ENCODE measurements at regions of chr9 and their contacts with region 1.

Region 1: GRCh38 chr9:7988644-7989280 is 189.2 kb upstream of the DMAC1 start:
- DNase-seq: no peak
- ATAC-seq: no peak
- H3K4me3 ChIP-seq: no peak overlapping the region
- H3K4me3 Mint-ChIP-seq: no peak overlapping the region
- H3K27ac ChIP-seq: no peak overlapping the region
- H3K27ac Mint-ChIP-seq: no peak overlapping the region
- H3K4me1 ChIP-seq: no peaks in the 10 kb centered on the region
- H3K4me1 Mint-ChIP-seq: peaks cover under 1% of the 10 kb centered on the region
- H3K27me3 ChIP-seq: peaks cover 0 to 3% of the 10 kb centered on the region in 2 experiments
- H3K27me3 Mint-ChIP-seq: peaks cover 4% of the 10 kb centered on the region
- CTCF ChIP-seq: no peak

Region 2: GRCh38 chr9:7935681-7936080 is 53.1 kb before region 1 on chr9:
- CTCF ChIA-PET with region 1: no interaction called
- POLR2A ChIA-PET with region 1: no interaction called
- intact Hi-C with region 1: no loop called
- DNase-seq: peak in 3 of 9 experiments; percentile 9 to 79 (median 59)
- ATAC-seq: peak; percentile 97
- H3K4me3 ChIP-seq: peak overlapping the region in 1 of 2 experiments; percentile 7
- H3K4me3 Mint-ChIP-seq: peak overlapping the region; percentile 69
- H3K27ac ChIP-seq: peak overlapping the region; percentile 34 to 51
- H3K27ac Mint-ChIP-seq: peak overlapping the region; percentile 95
- H3K4me1 ChIP-seq: peaks cover 25% of the 10 kb centered on the region
- H3K4me1 Mint-ChIP-seq: peaks cover 35% of the 10 kb centered on the region
- H3K27me3 ChIP-seq: no peaks in the 10 kb centered on the region
- H3K27me3 Mint-ChIP-seq: no peaks in the 10 kb centered on the region
- CTCF ChIP-seq: no peak

Region 3: GRCh38 chr9:7947577-7947976 is 41.2 kb before region 1 on chr9:
- CTCF ChIA-PET with region 1: no interaction called
- POLR2A ChIA-PET with region 1: no interaction called
- intact Hi-C with region 1: loop called in 1 of 2 experiments (anchors 5 kb)
- DNase-seq: no peak
- ATAC-seq: no peak
- H3K4me3 ChIP-seq: no peak overlapping the region
- H3K4me3 Mint-ChIP-seq: no peak overlapping the region
- H3K27ac ChIP-seq: no peak overlapping the region
- H3K27ac Mint-ChIP-seq: no peak overlapping the region
- H3K4me1 ChIP-seq: peaks cover 4% of the 10 kb centered on the region
- H3K4me1 Mint-ChIP-seq: peaks cover 10% of the 10 kb centered on the region
- H3K27me3 ChIP-seq: no peaks in the 10 kb centered on the region
- H3K27me3 Mint-ChIP-seq: no peaks in the 10 kb centered on the region
- CTCF ChIP-seq: no peak

Region 4: DNA sequence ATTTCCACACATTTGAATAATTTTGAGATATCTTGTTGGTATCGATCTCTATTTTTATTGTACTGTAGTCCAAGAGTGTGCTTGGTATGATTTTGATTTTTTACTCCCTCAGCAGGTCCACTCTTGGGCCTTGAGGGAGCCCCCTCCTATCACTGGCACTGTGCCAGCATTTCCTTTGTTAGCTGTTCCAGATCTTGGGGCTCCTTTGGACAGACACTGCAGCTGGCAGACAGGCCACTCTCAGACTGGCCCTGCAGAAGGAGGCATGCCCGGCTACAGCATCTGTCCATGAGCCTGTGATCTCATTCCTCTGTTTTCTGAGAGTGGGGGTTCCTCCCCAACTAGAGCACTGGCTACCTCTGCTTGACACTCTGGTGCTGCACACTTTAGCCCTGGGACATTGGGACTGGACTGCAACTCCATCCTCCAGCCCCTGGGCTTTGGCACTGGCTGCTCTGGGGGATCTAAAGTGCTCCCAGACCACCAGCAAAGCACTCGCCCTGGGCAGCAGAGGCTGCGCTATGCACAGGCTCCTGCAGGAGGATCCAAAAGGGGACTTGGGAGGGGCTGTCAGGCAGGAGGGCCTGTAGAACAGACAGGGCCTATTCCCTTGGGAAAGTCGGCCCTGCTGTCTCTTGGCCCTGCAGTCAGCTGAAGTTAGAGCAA is 82.2 kb after region 1 on chr9:
- CTCF ChIA-PET with region 1: no interaction called
- POLR2A ChIA-PET with region 1: no interaction called
- intact Hi-C with region 1: no loop called
- DNase-seq: no peak
- ATAC-seq: no peak
- H3K4me3 ChIP-seq: no peak overlapping the region
- H3K4me3 Mint-ChIP-seq: no peak overlapping the region
- H3K27ac ChIP-seq: no peak overlapping the region
- H3K27ac Mint-ChIP-seq: no peak overlapping the region
- H3K4me1 ChIP-seq: no peaks in the 10 kb centered on the region
- H3K4me1 Mint-ChIP-seq: no peaks in the 10 kb centered on the region
- H3K27me3 ChIP-seq: no peaks in the 10 kb centered on the region
- H3K27me3 Mint-ChIP-seq: no peaks in the 10 kb centered on the region
- CTCF ChIP-seq: no peak

Region 5: DNA sequence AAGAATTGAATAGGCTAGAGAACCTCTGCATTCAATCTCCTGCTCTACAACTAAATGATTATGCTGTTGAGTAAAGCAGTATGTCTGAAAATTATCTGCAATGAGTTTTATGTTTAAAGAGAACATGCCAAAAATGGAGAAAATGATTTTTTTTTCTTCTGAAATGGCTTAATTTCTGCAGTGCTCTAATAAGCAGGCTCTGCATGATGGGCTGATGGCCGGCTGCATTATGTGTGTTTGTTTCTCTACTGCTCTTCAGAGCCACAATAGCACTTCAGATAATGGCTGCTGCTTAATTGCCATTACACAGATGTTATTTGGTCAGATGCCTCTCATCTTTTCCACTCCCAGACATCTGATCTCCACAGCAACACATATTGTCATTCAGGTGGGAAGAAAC is 97.2 kb after region 1 on chr9:
- CTCF ChIA-PET with region 1: no interaction called
- POLR2A ChIA-PET with region 1: no interaction called
- intact Hi-C with region 1: no loop called
- DNase-seq: no peak
- ATAC-seq: no peak
- H3K4me3 ChIP-seq: no peak overlapping the region
- H3K4me3 Mint-ChIP-seq: no peak overlapping the region
- H3K27ac ChIP-seq: no peak overlapping the region
- H3K27ac Mint-ChIP-seq: no peak overlapping the region
- H3K4me1 ChIP-seq: no peaks in the 10 kb centered on the region
- H3K4me1 Mint-ChIP-seq: no peaks in the 10 kb centered on the region
- H3K27me3 ChIP-seq: no peaks in the 10 kb centered on the region
- H3K27me3 Mint-ChIP-seq: peaks cover 2% of the 10 kb centered on the region
- CTCF ChIP-seq: no peak